Lower leg skin (tissue), 4 donors: ENCODE measurements at regions of chr11 and their contacts with region 1.

Region 1: DNA sequence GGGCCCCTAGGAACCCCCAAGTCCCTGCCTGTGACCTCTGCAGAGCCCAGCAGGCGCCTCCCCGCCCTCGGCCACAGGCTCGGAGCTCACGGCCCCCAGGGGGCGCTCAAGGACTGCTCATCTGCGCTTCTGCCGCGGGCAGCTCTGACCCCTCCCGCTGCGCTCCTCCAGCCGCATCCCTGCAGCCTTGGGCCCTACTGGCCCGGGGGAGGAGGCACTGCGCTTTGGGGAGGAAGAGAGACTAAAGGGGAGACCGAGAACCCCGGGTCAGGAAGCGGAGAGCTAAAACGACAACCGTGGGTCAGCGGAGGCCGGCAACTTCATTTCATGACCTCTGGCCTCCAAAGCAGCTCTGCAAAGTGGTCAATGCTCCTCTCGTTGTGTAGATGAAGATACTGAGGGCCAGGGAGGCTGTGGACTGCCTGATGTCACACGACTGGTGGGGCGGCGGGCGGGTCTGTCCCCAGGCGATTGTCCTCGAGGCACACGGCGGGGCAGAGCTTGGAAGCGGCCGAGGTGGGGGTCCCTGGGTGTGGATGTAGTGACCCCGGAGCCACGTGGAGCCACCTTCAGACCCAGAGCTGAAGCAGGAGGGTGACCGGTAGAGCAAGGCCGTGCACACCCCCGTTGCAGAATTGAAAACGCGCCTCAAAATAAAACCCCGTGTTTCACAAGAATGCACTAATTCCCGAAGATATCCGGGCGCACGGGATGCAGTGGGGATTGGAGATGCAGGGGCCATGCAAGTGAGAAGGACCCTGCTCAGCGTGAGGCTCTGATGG is 2.7 kb upstream of the KRTAP5-6 start:
- DNase-seq: peak; percentile 65 to 96
- H3K4me3 ChIP-seq: no peak overlapping the region
- CTCF ChIP-seq: peak in 1 of 3 donors; percentile 74
- POLR2A ChIP-seq: no peak

Region 2: GRCh38 chr11:1757861-1758610 is 63.8 kb after region 1 on chr11:
- intact Hi-C with region 1: loop called (anchors 2 kb)
- DNase-seq: no peak
- H3K4me3 ChIP-seq: no peak overlapping the region
- CTCF ChIP-seq: no peak
- POLR2A ChIP-seq: no peak

Region 3: DNA sequence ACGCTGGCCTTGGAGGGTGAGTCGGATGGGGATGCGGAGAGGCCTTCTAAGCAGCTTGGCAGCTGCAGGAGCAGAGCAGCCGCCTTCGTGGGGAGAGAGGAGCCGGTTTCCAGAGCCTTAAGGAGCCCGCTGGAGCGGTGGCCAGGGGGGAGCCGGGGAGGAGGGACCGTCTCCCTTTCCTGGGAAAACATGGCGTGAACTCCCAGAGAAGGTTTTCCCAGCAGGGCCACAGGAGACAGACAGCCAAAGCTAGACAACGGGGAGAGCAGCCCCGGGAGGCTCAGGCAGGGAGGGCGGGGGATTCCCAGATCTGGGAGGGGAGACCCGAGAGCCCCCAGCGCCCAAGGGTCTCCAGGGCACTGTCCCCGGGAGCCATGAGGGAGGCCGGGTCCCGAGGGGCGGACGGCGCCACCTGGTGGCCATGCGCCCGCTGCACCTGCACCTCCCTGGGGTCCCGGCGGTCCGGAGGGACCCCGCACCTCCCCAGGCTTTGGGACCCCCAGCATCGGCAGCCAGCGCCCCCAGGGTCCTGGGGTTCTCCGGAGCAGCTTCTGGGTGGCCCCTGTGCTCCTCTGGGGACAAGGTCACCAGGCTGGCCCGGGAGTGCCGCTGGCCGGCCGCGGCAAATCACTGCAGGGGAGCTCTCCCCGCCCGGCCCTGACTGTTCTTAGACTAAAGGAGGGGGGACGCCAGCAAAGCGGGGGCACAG is 138.1 kb after region 1 on chr11:
- intact Hi-C with region 1: loop called (anchors 5 kb)
- DNase-seq: no peak
- H3K4me3 ChIP-seq: no peak overlapping the region
- CTCF ChIP-seq: peak in 2 of 3 donors; percentile 56 to 89
- POLR2A ChIP-seq: no peak

Region 4: DNA sequence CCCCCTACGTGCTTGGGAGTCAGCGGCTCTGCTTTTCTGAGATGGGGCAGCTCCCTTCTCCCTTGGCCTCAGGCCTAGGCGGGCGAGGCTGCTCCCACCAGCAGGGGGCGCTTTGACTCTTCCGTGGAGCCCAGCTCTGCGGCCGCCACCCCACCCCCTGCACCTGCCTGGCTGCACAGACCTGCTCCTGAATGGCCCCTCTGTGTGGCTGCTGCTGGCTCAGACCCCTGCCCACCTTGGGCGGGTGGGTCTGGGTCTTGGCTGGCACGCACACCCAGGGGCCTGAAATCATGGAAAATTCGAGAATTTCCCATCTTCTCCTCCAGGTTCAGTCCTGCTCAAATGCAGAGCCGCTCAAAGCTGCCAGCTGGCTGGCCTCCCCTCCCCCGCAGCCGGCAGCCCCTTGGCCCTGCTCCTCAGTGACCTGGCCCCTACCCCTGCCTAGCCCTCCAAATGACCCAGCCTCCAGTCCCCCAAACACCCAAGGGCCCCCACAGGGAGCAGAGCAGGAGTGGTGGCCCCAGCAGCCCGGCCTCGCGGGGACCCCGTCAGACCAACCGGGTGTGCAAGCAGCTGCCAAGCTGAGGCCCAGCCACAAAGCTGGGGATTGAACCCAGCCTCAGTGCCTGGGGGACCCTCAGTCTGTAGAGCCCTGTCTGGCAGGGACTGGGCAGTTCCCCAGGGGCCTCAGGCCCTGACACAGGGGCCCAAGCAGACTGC is 188.4 kb after region 1 on chr11:
- intact Hi-C with region 1: loop called (anchors 5 kb)
- DNase-seq: peak in 1 of 2 donors; percentile 95
- H3K4me3 ChIP-seq: no peak overlapping the region
- CTCF ChIP-seq: peak in 1 of 3 donors; percentile 50
- POLR2A ChIP-seq: no peak

Region 5: DNA sequence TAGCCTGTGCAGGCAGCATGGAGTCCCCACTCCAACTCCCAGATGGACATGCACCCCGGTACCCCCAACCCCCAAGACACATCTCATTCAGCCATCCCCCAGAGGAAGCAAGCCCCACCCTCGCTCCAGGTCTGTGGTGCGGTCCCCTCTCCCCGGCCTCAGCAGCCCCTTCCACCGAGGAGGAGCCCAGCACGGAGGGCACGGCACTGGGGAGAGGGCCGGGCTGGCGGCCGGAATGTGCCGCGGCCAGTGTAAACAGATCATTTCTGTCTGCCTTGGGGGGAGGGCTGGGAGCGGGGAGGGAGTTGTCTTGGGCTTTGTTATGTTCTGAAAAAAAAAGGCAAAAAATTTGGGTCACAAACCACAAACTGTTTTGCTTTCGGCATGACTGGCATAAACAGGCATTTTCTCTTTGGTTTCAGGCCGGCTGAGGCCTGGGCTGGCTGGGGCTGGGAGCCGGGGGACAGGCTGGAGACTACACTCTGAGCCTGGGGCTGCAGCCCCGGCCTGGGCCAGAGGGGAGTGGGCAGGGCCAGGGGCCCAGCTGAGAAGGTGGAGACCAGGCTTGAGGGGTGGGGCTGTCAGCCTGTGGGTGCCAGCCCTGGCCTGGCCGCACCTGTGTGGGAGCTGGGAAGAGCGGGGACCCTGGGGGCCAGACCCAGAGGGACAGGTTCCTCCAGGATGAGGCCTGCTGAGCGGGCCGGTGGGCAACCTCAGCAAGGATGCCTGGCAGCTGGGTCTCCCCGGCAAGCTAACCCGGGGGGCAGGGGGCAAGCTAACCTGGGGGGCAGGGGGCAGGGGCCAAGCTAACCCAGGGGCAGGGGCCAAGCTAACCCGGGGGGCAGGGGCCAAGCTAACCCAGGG is 428.2 kb after region 1 on chr11:
- intact Hi-C with region 1: no loop called
- DNase-seq: no peak
- H3K4me3 ChIP-seq: no peak overlapping the region
- CTCF ChIP-seq: no peak
- POLR2A ChIP-seq: no peak

Region 6: GRCh38 chr11:2151500-2152257 is 457.4 kb after region 1 on chr11:
- intact Hi-C with region 1: loop called (anchors 10 kb)
- DNase-seq: peak; percentile 71 to 96
- H3K4me3 ChIP-seq: no peak overlapping the region
- CTCF ChIP-seq: peak in 1 of 3 donors; percentile 83
- POLR2A ChIP-seq: no peak